CD14-positive monocyte (primary cell): ENCODE measurements at regions of chr20 and their contacts with region 1.

Region 1: GRCh38 chr20:48921151-48921898 is at the start of gene ARFGEF2:
- DNase-seq: peak; percentile 92 to 95 (median 93)
- H3K4me3 ChIP-seq: peak within 1 kb of the TSS; percentile 66 to 80 (median 77)
- H3K4me3 Mint-ChIP-seq: peak within 1 kb of the TSS; percentile 94 to 97
- H3K27ac ChIP-seq: peak within 1 kb of the TSS; percentile 88 to 98
- H3K27ac Mint-ChIP-seq: peak within 1 kb of the TSS; percentile 99 to 100 (median 100)
- H3K4me1 ChIP-seq: peaks cover 43 to 52% of the 10 kb centered on the region in 2 donors
- H3K4me1 Mint-ChIP-seq: peaks cover 57% of the 10 kb centered on the region
- H3K27me3 ChIP-seq: no peaks in the 10 kb centered on the region
- H3K27me3 Mint-ChIP-seq: peaks cover 0 to 3% (median 1%) of the 10 kb centered on the region in 3 donors
- CTCF ChIP-seq: no peak
- polyA plus RNA-seq, gene ARFGEF2: 4.6 to 10.9 (median 5.5) TPM

Region 2: DNA sequence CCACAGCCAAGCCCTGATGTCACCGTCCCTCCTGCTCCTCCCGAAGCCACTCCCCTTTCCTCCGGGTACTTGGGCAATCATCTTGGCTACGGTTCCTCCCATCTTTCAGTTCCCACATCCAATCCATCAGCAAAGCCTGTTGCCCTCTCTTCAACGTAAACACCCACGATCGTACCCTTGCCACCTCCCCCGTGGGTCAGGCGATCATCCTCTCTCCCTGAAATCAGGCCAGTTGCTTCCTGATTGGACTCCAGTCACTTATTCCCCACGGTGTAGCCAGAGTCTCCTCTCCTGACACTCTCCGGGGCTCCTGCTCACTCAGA is 1180.5 kb before region 1 on chr20:
- intact Hi-C with region 1: loop called in 1 of 2 experiments (anchors 10 kb)
- DNase-seq: peak; percentile 97 to 99 (median 98)
- H3K4me3 ChIP-seq: peak overlapping the region in 1 of 3 experiments; percentile 48
- H3K4me3 Mint-ChIP-seq: peak overlapping the region; percentile 64 to 76
- H3K27ac ChIP-seq: peak overlapping the region; percentile 92 to 94
- H3K27ac Mint-ChIP-seq: peak overlapping the region; percentile 98 to 99 (median 99)
- H3K4me1 ChIP-seq: peaks cover 58 to 79% of the 10 kb centered on the region in 2 donors
- H3K4me1 Mint-ChIP-seq: peaks cover 80% of the 10 kb centered on the region
- H3K27me3 ChIP-seq: no peaks in the 10 kb centered on the region
- H3K27me3 Mint-ChIP-seq: no peaks in the 10 kb centered on the region
- CTCF ChIP-seq: no peak

Region 3: DNA sequence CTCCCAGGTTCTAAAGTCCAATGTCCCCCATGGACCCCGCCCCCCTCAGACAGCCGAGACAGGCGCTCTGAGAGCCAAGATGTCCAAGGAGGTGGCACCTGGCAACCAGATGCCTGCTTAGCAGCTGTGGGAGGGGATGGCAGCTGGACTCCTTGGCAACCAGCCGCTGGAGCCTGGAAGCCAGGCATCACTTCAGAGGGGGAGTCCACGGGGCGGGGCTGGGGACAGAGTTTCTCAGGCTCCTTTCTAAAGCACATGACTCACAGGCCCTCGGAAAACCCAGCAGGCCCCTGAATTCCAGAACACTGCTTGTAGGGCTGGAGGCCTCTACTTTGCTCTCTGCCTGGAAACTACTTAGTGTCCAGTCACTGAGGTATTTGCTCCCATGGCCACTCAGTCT is 145.0 kb before region 1 on chr20:
- intact Hi-C with region 1: loop called in 1 of 2 experiments (anchors 5 kb)
- DNase-seq: peak; percentile 48 to 93 (median 62)
- H3K4me3 ChIP-seq: no peak overlapping the region
- H3K4me3 Mint-ChIP-seq: peak overlapping the region in 1 of 2 donors; percentile 41
- H3K27ac ChIP-seq: peak overlapping the region; percentile 89 to 94
- H3K27ac Mint-ChIP-seq: peak overlapping the region; percentile 98 to 100 (median 99)
- H3K4me1 ChIP-seq: peaks cover 73 to 93% of the 10 kb centered on the region in 2 donors
- H3K4me1 Mint-ChIP-seq: peaks cover 82% of the 10 kb centered on the region
- H3K27me3 ChIP-seq: no peaks in the 10 kb centered on the region
- H3K27me3 Mint-ChIP-seq: peaks cover 0 to 1% (median 0%) of the 10 kb centered on the region in 3 donors
- CTCF ChIP-seq: no peak